ENCODE measurements at regions of chr14 and their contacts with region 1.

Region 1: GRCh38 chr14:32252030-32252670 is 49.1 kb upstream of the RNU6-8 start:
- DNase-seq: no peak
- ATAC-seq: peak; percentile 82

Region 2: GRCh38 chr14:31510222-31510621 is 741.9 kb before region 1 on chr14:
- intact Hi-C with region 1: loop called (anchors 2 kb)
- DNase-seq: no peak
- ATAC-seq: no peak

Region 3: GRCh38 chr14:31934767-31935266 is 317.3 kb before region 1 on chr14:
- intact Hi-C with region 1: loop called (anchors 1 kb)
- DNase-seq: no peak
- ATAC-seq: peak; percentile 78

Region 4: DNA sequence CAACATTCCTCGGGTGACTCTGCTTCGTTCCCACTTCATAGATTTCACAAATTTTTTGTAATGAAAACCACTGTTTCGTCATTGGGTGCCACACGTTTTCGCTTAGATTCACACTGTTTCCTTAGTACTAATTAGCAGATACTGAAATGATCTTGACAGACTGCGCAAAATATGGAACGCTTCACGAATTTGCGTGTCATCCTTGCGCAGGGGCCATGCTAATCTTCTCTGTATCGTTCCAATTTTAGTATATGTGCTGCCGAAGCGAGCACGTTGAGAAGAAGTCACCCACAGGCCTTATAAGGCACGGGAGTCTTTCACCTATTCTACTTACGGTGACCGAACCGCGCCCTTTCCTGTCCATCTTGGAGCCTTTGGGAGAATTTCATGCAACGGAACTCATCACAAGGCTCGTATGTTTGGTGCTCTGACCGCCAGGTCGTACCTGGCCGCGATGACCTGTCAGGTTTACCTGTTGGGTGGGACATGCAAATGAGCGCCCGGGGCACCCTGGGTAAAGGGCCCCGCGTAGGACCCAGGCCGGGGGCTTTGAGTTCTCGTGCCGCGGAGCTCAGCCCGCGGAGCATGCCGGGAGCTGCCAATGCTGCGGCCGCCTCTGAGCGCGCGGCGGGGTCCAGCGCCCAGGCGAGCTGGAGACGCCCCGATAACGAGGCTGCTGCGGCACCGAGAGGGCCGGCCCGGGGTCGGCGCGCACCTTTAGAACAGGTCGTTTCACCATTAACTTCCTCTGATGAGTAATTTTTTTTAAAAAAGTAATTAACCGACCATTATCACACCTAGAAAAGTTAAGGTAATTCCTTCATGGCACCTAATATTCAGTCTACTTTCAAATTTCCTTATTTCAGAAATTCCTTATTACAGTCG is 48.9 kb before region 1 on chr14 and contains the start of gene RNU6-8:
- intact Hi-C with region 1: loop called (anchors 2 kb)
- DNase-seq: peak; percentile 91
- ATAC-seq: peak; percentile 95
- total RNA-seq, gene RNU6-8: not detected

Region 5: GRCh38 chr14:32457213-32457920 is 205.2 kb after region 1 on chr14:
- intact Hi-C with region 1: no loop called
- DNase-seq: peak; percentile 74
- ATAC-seq: peak; percentile 98

Region 6: DNA sequence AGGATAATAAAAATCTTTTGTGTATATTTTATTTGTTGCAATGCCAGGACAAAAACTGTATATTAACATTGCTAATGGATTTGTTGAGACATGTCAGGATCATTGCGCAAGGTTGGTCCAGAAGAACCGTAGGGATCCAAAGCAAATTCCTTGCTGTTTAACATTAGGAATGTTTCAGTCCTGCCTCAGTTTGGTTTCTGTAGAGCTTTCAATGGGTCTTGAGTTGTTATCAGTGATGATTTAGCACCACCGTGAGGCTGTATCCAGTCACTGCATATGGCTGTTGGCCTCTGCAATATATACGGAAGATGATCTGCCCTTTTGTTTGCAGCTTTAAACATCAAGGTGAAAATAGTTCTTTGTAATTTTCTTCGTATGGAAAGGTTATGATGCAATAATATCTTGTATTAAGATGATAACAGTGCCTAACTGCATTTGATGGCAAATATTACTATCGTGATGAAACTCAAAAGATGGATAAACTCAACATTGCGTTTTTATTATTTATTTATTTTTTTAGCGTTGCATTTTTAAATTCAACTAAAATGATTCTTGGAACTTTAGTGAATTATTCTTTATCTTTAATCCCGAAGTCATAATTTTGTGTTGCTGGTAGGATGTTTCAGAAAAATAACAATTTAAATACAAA is 308.2 kb after region 1 on chr14:
- intact Hi-C with region 1: loop called (anchors 2 kb)
- DNase-seq: no peak
- ATAC-seq: peak; percentile 85